Activated CD4-positive, alpha-beta T cell treated with anti-CD3 and anti-CD28 coated beads for 36 hours (primary cell): ENCODE measurements at regions of chr6 and their contacts with region 1.

Region 1: GRCh38 chr6:85923013-85923430 is 280.3 kb upstream of the SYNCRIP start:
- DNase-seq: peak; percentile 18
- ATAC-seq: peak; percentile 63
- H3K4me3 Mint-ChIP-seq: no peak overlapping the region
- H3K27ac Mint-ChIP-seq: no peak overlapping the region
- H3K4me1 Mint-ChIP-seq: no peaks in the 10 kb centered on the region
- H3K27me3 Mint-ChIP-seq: no peaks in the 10 kb centered on the region

Region 2: DNA sequence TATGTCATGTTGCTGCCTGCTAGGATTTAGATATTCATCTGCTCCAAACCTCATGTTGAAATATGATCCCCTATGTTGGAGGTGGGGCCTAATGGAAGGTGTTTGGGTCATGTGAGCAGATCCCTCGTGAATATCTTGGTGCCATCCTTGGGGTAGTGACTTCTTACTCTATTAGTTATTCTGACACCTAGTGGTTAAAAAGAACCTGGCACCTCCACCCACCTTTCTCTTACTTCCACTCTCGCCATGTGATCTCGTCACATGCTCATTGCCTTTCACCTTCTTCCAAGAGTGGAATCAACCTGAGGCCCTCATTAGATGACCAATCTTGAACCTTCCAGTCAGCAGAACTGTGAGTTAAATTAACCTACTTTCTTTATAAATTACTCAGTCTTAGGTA is 269.1 kb after region 1 on chr6:
- CTCF ChIA-PET with region 1: no interaction called
- POLR2A ChIA-PET with region 1: no interaction called
- intact Hi-C with region 1: loop called in 1 of 2 experiments (anchors 1 kb)
- DNase-seq: peak; percentile 13
- ATAC-seq: no peak
- H3K4me3 Mint-ChIP-seq: no peak overlapping the region
- H3K27ac Mint-ChIP-seq: no peak overlapping the region
- H3K4me1 Mint-ChIP-seq: no peaks in the 10 kb centered on the region
- H3K27me3 Mint-ChIP-seq: no peaks in the 10 kb centered on the region

Region 3: DNA sequence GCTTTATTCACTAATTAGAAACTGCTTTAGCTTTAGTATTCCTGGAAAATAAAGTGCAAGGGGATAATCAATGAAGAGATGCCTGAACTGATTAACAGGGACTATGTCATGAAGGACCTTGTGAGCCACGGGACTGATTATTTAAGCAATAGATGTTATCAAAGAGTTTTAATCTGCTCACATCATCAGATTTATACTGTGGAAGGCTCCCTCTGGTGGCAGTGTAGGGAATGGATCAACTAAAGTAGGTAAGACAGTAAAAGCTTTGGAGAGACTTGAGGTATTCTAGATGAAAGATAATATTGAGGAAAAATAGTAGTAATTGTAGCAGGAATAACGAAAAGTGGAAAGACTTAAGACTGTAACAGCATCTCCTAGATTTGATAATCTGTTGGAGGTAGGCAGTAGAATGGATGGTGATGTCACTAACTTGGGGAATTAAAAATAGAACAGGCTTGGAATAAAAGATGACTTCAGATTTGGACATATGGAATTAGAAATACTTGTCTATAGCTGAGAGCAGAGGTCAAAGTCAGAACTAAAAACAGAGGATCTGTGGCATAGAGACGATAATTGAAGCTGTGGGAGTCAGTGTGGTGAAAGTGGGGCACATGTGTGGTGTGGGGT is 934.0 kb after region 1 on chr6:
- CTCF ChIA-PET with region 1: no interaction called
- POLR2A ChIA-PET with region 1: no interaction called
- intact Hi-C with region 1: loop called (anchors 1 to 2 kb)
- DNase-seq: peak; percentile 53
- ATAC-seq: no peak
- H3K4me3 Mint-ChIP-seq: no peak overlapping the region
- H3K27ac Mint-ChIP-seq: no peak overlapping the region
- H3K4me1 Mint-ChIP-seq: no peaks in the 10 kb centered on the region
- H3K27me3 Mint-ChIP-seq: peaks cover 5% of the 10 kb centered on the region

Region 4: GRCh38 chr6:87029711-87030314 is 1106.8 kb after region 1 on chr6:
- CTCF ChIA-PET with region 1: no interaction called
- POLR2A ChIA-PET with region 1: no interaction called
- intact Hi-C with region 1: loop called in 1 of 2 experiments (anchors 2 kb)
- DNase-seq: no peak
- ATAC-seq: no peak
- H3K4me3 Mint-ChIP-seq: no peak overlapping the region
- H3K27ac Mint-ChIP-seq: no peak overlapping the region
- H3K4me1 Mint-ChIP-seq: no peaks in the 10 kb centered on the region
- H3K27me3 Mint-ChIP-seq: peaks cover 2% of the 10 kb centered on the region